HEK293T (cell line): ENCODE measurements at regions of chr12 and their contacts with region 1.

Region 1: DNA sequence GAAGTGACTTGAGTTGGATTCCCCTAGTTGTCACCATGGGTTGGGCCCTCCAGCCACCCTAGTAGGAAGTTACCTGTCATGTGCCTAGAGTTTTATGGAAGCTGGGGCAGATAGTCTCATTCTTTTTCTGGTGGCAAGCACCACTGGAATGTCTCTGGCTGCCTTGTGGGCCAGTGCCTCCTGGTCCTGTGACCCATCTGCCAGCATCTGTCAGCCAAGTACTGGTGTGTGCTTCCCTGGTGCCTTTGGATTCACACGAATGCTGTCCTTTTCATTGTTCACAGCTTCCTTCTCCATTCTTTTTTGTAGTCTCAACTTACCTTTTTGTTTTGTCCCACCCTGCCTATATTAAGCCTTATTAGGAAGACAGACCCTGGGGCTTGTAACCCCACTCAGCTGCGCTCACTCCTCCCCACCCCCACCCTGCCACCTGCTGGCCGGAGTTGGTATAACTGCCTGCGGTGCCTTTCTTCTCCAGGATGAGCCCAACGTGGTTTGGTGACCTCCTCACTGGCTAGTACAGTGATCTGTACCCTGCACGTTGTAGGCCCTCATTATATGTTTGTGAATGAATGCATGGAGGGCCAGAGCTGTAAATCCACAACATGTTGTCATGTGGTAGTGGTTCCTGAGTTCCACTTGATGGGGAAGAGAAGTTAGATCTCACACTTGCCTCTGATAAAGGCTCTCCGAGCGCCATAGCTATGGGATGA is 125.7 kb downstream of the TSPAN9 start:
- DNase-seq: peak; percentile 77

Region 2: GRCh38 chr12:3135522-3136461 is 67.1 kb before region 1 on chr12:
- CTCF ChIA-PET with region 1: interaction called, 10 read pairs
- POLR2A ChIA-PET with region 1: interaction called, 3 read pairs
- DNase-seq: peak; percentile 88

Region 3: DNA sequence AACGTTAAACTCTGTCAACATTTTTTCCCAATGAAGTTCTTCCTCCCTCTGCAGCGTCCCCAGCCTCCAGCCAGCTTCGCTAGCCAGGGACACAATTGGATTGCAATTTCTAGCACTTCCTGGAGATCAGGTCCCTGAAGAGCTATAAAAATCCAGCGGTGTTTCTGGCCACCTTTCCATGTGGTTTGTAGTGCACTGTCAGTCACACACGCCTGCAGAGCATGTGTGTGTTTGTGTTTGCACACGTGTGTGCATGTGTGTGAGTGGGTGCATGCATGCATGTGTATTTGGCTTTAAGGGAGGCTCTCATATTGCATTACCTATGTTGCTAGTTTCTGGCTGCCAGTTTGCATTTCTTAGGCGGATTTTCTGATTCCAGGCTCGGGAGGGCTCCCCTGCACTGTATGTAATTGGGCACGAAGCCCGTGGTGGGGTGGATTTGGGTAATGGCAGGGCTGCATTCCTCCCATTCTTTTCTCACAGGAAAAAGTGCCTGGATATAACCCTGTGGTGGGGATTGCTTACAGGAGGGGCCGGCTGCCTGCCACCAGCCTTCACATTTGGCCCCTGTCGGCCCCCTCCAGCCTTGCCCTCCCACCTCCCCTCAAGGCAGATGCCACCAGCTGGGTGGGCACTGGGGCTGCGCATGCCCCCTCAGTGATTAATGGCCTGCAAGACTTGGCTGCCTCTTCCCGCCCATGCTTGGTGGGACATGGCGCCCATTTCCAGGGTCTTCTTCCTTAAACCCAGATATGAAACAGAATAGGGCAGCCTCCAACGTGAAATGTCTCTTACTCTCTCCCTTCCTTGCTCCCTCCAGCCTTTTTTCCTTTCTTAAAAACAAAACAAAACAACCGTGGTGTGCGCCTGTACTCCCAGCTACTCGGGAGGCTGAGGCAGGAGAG is 51.7 kb before region 1 on chr12:
- CTCF ChIA-PET with region 1: no interaction called
- POLR2A ChIA-PET with region 1: no interaction called
- DNase-seq: no peak